ENCODE measurements at regions of chr5 and their contacts with region 1.

Region 1: GRCh38 chr5:127796211-127796610 is 93.0 kb downstream of the CCDC192 start:
- DNase-seq: no peak
- ATAC-seq: no peak
- H3K4me3 Mint-ChIP-seq: no peak overlapping the region
- H3K27ac Mint-ChIP-seq: no peak overlapping the region
- H3K4me1 Mint-ChIP-seq: peaks cover 4% of the 10 kb centered on the region
- H3K27me3 Mint-ChIP-seq: no peaks in the 10 kb centered on the region

Region 2: GRCh38 chr5:127192836-127193338 is 603.3 kb before region 1 on chr5:
- CTCF ChIA-PET with region 1: no interaction called
- DNase-seq: no peak
- ATAC-seq: no peak
- H3K4me3 Mint-ChIP-seq: no peak overlapping the region
- H3K27ac Mint-ChIP-seq: no peak overlapping the region
- H3K4me1 Mint-ChIP-seq: no peaks in the 10 kb centered on the region
- H3K27me3 Mint-ChIP-seq: peaks cover 13% of the 10 kb centered on the region

Region 3: GRCh38 chr5:127486471-127486870 is 309.7 kb before region 1 on chr5:
- CTCF ChIA-PET with region 1: no interaction called
- DNase-seq: no peak
- ATAC-seq: no peak
- H3K4me3 Mint-ChIP-seq: no peak overlapping the region
- H3K27ac Mint-ChIP-seq: no peak overlapping the region
- H3K4me1 Mint-ChIP-seq: no peaks in the 10 kb centered on the region
- H3K27me3 Mint-ChIP-seq: peaks cover 14% of the 10 kb centered on the region

Region 4: GRCh38 chr5:127785098-127785927 is 10.9 kb before region 1 on chr5:
- CTCF ChIA-PET with region 1: interaction called, 11 read pairs
- DNase-seq: peak; percentile 78
- ATAC-seq: peak; percentile 92
- H3K4me3 Mint-ChIP-seq: peak overlapping the region; percentile 42
- H3K27ac Mint-ChIP-seq: peak overlapping the region; percentile 92
- H3K4me1 Mint-ChIP-seq: peaks cover 32% of the 10 kb centered on the region
- H3K27me3 Mint-ChIP-seq: no peaks in the 10 kb centered on the region

Region 5: DNA sequence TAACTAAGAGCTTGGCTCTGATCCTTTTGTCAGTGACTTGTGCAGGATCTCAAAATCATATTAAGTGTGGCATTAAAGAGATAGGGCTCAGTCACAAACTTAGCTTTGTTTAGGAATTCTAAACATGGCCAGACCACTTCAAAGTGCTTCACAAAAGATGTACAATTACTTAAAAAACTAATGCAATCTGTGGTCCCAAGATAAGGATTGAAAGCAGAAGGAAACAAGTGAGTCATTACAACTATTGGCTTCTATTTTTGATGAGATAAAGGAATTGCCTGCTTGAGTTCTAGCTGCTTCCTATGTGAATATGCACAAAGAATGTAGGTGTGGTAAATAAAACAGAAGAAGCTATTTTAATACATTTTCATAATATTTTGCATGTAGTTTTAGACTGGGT is 242.4 kb after region 1 on chr5:
- CTCF ChIA-PET with region 1: no interaction called
- DNase-seq: no peak
- ATAC-seq: no peak
- H3K4me3 Mint-ChIP-seq: no peak overlapping the region
- H3K27ac Mint-ChIP-seq: no peak overlapping the region
- H3K4me1 Mint-ChIP-seq: no peaks in the 10 kb centered on the region
- H3K27me3 Mint-ChIP-seq: no peaks in the 10 kb centered on the region